ENCODE measurements at regions of chr5 and their contacts with region 1.

Region 1: DNA sequence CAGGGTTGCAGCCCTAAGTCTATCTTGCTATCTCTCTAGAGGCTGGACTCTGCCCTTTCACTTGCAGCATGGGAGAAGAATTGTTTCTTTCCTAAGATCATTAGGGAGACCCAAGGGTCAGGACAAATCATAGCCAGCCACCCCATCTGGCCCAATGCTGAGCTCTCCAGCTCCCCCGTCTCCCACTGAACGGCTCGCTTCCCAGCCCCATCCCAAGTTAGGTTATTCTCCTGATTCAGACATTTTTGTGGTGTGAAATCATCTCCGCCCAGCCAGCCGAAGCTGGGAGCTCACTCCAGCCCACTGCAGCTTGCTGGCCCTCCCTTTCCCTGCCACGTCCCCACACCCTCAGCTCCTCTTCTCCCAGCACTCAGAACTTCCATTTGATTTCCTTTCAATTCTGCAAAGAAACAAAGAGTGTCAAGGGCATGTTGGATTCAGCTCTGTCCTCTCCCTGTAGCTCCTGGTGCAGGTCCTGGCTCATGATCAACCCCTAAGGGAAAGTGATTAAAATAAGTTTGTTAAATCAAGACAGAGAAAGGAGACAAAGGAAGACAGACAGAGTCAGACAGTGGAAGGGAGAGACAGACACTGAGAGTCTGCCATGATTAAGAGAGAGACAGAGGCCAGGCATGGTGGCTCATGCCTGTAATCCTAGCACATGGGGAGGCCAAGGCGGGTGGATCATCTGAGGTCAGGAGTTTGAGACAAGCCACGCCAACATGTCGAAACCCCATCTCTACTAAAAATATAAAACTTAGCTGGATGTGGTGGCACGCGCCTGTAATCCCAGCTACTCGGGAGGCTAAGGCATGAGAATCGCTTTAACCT is 12.6 kb upstream of the SPARC start:
- DNase-seq: peak; percentile 92 to 93
- ATAC-seq: peak; percentile 88
- H3K4me3 ChIP-seq: no peak overlapping the region
- H3K27ac ChIP-seq: peak overlapping the region; percentile 86 to 96
- H3K4me1 ChIP-seq: peaks cover 0 to 3% of the 10 kb centered on the region in 2 donors
- H3K27me3 ChIP-seq: no peaks in the 10 kb centered on the region

Region 2: DNA sequence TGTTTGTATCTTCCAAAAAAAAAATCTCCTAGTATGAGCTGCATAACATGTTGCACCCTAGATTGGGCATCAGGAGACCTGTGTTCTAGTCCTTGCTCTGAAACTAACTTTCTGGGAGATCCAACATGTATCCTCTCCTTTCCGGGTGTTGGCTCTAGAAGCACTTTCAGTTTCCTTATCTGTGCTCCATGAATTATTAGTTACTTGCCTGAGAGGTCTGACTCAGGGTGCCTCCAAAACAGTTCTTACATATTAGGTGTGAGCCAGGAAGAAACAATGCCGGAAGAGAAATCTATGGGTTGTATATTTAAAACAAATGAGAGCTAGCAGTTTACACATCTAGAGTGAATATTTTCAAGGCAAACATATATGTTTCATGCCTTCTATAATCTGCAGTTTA is 315.2 kb before region 1 on chr5:
- intact Hi-C with region 1: no loop called
- DNase-seq: no peak
- ATAC-seq: no peak
- H3K4me3 ChIP-seq: no peak overlapping the region
- H3K27ac ChIP-seq: no peak overlapping the region
- H3K4me1 ChIP-seq: no peaks in the 10 kb centered on the region
- H3K27me3 ChIP-seq: no peaks in the 10 kb centered on the region

Region 3: DNA sequence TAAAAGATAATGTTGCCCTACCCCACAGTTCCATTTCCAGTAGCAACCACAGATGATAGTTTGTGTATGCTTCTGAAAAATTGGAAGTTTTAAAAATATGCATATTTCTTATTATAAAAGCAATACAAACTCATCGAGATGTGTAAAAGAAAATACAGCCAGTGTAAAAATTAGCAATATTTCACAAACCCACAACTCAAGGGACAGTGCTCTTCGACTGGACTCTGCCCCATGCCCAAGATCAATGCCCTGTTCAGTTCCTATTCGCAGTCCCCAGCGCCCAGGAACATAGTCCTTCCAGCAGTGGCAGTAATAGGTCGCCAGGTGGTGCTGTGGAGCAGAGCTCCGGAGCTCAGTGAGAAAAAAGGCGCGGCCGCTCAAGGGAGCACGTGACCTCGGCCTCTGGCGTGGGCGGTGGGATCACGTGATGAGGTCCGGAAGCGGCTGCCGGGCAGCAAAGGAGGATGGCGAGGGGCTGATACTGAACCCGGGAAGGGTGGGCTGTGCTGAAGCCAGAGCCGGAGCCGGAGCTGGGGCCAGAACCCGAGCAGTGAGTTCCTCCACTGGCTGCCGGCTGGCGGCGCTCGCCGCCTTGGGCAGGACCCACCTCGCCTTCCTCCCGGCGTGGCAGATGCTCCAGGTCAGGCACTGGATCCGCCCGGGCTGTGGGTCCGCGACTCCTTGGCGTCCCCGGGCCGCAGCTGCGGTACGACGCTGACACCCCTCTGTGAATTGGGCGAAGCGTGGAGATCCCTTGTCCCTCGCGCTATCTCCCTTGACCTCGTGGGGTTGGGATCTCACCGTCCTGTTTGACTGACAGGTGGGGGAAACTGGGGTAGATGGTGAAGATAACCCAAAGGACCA is 251.9 kb before region 1 on chr5 and contains the start of gene SLC36A1:
- intact Hi-C with region 1: no loop called
- DNase-seq: peak; percentile 97 to 99
- ATAC-seq: peak; percentile 99
- H3K4me3 ChIP-seq: peak within 1 kb of the TSS; percentile 51 to 65
- H3K27ac ChIP-seq: no peak within 1 kb of the TSS
- H3K4me1 ChIP-seq: no peaks in the 10 kb centered on the region
- H3K27me3 ChIP-seq: no peaks in the 10 kb centered on the region
- total RNA-seq, gene SLC36A1: 13.6 to 19.0 TPM

Region 4: GRCh38 chr5:151659001-151659754 is 40.1 kb before region 1 on chr5:
- intact Hi-C with region 1: loop called in 1 of 2 experiments (anchors 5 kb)
- DNase-seq: peak; percentile 89 to 94
- ATAC-seq: peak; percentile 93
- H3K4me3 ChIP-seq: no peak overlapping the region
- H3K27ac ChIP-seq: no peak overlapping the region
- H3K4me1 ChIP-seq: no peaks in the 10 kb centered on the region
- H3K27me3 ChIP-seq: no peaks in the 10 kb centered on the region

Region 5: GRCh38 chr5:151664694-151665585 is 34.3 kb before region 1 on chr5:
- intact Hi-C with region 1: loop called (anchors 5 kb)
- DNase-seq: peak in 1 of 2 donors; percentile 69
- ATAC-seq: peak; percentile 11
- H3K4me3 ChIP-seq: no peak overlapping the region
- H3K27ac ChIP-seq: peak overlapping the region; percentile 36 to 75
- H3K4me1 ChIP-seq: peaks cover 0 to 4% of the 10 kb centered on the region in 2 donors
- H3K27me3 ChIP-seq: no peaks in the 10 kb centered on the region